ENCODE measurements at regions of chr11 and their contacts with region 1.

Region 1: DNA sequence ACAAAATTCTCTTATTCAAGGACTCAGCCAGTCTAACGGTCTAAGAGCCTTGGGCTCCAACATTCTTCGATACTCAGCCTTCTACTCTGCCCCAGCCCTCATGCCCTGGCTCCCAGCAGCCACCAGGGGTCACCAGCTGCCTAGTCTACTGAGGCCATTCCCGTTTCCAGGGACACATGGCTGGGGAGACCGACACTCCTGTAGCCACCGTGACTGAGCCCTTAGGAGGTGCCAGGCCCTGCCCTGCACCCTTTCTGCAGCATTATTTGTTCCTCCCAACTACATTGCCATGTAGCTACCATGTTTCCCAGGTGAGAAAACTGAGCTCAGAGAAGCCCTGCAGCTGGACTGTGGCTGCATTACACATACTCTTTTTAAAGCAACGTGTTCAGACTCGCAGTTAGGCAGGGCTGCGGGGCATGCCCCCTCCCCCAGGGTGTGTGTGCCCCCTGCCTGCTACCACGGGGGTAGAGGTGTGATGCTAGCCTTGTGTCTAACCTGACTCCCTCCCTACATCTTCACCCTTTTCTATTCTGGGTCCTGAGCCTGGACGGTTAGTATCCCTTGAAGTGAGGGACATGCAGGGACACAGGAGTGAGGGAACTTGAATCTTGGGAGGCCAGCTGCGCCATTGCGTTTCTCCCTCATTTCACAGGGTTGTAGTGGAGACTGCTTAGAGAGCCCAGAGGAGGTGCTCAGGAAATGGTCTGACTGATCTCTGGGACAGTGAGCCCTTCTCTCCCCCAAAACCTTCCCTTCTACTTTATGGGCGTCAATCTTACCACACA is 17.5 kb downstream of the ATG16L2 start:
- DNase-seq: peak; percentile 73 to 84 (median 80)
- ATAC-seq: peak; percentile 71 to 85 (median 80)
- H3K4me3 ChIP-seq: no peak overlapping the region
- H3K27ac ChIP-seq: peak overlapping the region; percentile 13 to 26 (median 24)
- H3K4me1 ChIP-seq: peaks cover 0 to 19% (median 7%) of the 10 kb centered on the region in 4 donors
- H3K27me3 ChIP-seq: no peaks in the 10 kb centered on the region
- CTCF ChIP-seq: peak; percentile 92 to 95 (median 93)
- POLR2A ChIP-seq: no peak

Region 2: DNA sequence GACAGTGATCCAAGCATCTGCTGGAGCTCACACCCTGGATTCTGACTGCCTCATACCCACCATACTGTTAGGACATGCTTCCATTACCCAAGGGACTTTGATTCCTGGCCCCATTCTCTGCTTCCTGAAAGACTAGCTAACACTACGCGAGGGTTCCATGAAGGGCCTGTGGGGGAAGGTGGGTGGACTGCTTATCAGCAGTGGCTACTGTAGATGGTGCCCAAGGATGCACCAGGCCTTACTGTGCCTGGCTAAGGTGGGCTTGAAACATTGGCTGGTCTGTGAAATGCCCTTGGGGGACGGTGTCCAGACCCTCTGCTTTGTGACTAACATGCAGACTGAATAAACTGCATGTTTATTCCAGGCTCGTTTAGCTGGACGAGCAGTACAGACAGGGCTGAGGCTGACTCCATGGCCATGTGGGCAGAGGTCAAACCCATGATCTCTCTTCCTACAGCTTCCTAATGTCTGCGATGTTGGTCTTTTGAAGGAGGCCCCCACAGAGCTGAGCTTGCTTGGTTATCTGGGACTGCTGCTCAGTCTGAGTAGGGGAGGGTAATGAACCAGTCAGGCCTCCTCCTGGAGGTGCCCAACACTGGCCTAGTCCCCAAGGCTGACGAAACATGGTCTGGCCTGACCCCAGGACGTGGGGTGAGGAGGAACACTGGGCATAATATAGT is 539.5 kb before region 1 on chr11:
- intact Hi-C with region 1: no loop called
- DNase-seq: no peak
- ATAC-seq: peak in 1 of 4 donors; percentile 12
- H3K4me3 ChIP-seq: no peak overlapping the region
- H3K27ac ChIP-seq: no peak overlapping the region
- H3K4me1 ChIP-seq: no peaks in the 10 kb centered on the region
- H3K27me3 ChIP-seq: no peaks in the 10 kb centered on the region
- CTCF ChIP-seq: no peak
- POLR2A ChIP-seq: no peak

Region 3: GRCh38 chr11:73177778-73178577 is 346.3 kb after region 1 on chr11:
- intact Hi-C with region 1: loop called (anchors 5 kb)
- DNase-seq: peak; percentile 87 to 88 (median 87)
- ATAC-seq: peak; percentile 70 to 91 (median 82)
- H3K4me3 ChIP-seq: no peak overlapping the region
- H3K27ac ChIP-seq: peak overlapping the region in 1 of 3 donors; percentile 33
- H3K4me1 ChIP-seq: peaks cover 0 to 37% (median 6%) of the 10 kb centered on the region in 4 donors
- H3K27me3 ChIP-seq: no peaks in the 10 kb centered on the region
- CTCF ChIP-seq: peak; percentile 75 to 92 (median 82)
- POLR2A ChIP-seq: no peak

Region 4: GRCh38 chr11:73184953-73185671 is 353.4 kb after region 1 on chr11:
- intact Hi-C with region 1: loop called in 1 of 2 experiments (anchors 5 kb)
- DNase-seq: peak; percentile 72 to 78 (median 76)
- ATAC-seq: peak; percentile 90 to 94 (median 91)
- H3K4me3 ChIP-seq: no peak overlapping the region
- H3K27ac ChIP-seq: no peak overlapping the region
- H3K4me1 ChIP-seq: no peaks in the 10 kb centered on the region
- H3K27me3 ChIP-seq: no peaks in the 10 kb centered on the region
- CTCF ChIP-seq: peak; percentile 85 to 91 (median 88)
- POLR2A ChIP-seq: no peak

Region 5: DNA sequence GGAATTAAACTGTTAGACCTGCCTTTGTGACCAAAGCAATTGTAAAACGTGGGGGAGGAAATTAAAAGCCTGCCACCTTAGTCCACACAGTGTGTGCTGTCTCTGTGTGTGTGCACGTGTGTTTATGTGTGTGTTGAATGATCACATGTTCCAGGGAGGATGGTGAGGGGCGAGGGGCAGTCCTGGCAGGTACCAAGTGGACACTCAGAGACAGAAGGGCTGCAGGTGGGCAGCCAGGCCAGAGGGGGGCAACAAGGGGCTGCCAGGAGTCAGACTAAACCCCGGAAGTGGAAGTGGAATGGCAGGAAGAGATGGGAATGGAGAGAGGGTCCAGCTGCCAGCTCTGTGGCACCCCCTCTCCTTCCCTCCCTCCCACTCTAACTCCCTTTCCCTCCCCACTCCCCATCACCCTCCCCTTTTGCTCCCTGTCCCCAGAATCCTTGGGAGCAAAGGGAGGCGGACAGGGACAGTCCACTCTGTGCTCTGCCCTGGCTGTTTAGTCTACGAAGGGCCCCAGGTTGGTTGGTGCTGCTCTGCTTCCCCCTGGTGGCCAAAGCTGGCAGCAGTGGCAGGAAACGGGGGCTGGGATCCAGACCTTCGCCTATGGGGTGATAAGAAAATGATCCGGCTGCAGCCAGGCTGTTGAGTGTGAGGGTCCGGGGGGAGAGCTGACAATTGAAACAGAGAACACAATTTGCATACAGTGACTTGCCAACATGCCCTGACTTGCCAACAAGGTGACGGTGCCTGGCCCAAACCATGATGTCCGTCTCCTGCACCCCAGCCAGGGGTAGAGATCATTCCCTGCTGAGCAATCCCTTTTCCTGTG is 410.8 kb after region 1 on chr11:
- intact Hi-C with region 1: loop called in 1 of 2 experiments (anchors 10 kb)
- DNase-seq: peak; percentile 74 to 77 (median 76)
- ATAC-seq: peak; percentile 92 to 96 (median 94)
- H3K4me3 ChIP-seq: no peak overlapping the region
- H3K27ac ChIP-seq: no peak overlapping the region
- H3K4me1 ChIP-seq: no peaks in the 10 kb centered on the region
- H3K27me3 ChIP-seq: no peaks in the 10 kb centered on the region
- CTCF ChIP-seq: peak; percentile 84 to 94 (median 85)
- POLR2A ChIP-seq: no peak

Measured in right lobe of liver (tissue), 6 donors.